AG04449 (cell line): ENCODE measurements at regions of chr1 and their contacts with region 1.

Region 1: GRCh38 chr1:180178511-180179161 is 24.0 kb downstream of the QSOX1 start:
- DNase-seq: no peak
- H3K4me3 ChIP-seq: no peak overlapping the region
- CTCF ChIP-seq: peak; percentile 94

Region 2: GRCh38 chr1:179877586-179878265 is 300.9 kb before region 1 on chr1 and contains the start of gene TOR1AIP2:
- CTCF ChIA-PET with region 1: interaction called, 21 read pairs
- POLR2A ChIA-PET with region 1: no interaction called
- DNase-seq: no peak
- H3K4me3 ChIP-seq: peak within 1 kb of the TSS; percentile 88
- CTCF ChIP-seq: no peak

Region 3: GRCh38 chr1:180033390-180033789 is 145.2 kb before region 1 on chr1:
- CTCF ChIA-PET with region 1: interaction called, 18 read pairs
- POLR2A ChIA-PET with region 1: no interaction called
- DNase-seq: no peak
- H3K4me3 ChIP-seq: no peak overlapping the region
- CTCF ChIP-seq: no peak

Region 4: DNA sequence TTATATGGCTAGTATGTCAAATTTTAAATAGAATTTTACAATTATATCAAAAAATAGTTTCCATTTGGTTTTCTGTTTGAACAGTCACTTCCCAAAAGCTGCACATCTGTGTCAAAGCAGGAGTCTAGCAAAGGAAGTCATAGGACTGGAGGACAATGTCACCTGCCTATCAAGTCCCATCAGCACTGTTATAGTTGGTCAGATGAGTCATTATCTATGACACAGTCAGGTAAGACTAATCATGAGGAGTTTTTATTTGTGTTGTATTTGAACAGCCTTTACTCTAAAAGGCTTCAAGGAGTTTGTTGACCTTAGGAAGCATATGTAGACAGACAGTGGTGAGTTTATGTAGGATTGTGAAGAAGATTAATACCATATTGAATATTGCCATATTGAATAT is 98.2 kb before region 1 on chr1:
- CTCF ChIA-PET with region 1: interaction called, 13 read pairs
- POLR2A ChIA-PET with region 1: no interaction called
- DNase-seq: no peak
- H3K4me3 ChIP-seq: no peak overlapping the region
- CTCF ChIP-seq: no peak

Region 5: GRCh38 chr1:180112984-180113647 is 65.5 kb before region 1 on chr1:
- CTCF ChIA-PET with region 1: no interaction called
- POLR2A ChIA-PET with region 1: no interaction called
- DNase-seq: no peak
- H3K4me3 ChIP-seq: no peak overlapping the region
- CTCF ChIP-seq: no peak

Region 6: DNA sequence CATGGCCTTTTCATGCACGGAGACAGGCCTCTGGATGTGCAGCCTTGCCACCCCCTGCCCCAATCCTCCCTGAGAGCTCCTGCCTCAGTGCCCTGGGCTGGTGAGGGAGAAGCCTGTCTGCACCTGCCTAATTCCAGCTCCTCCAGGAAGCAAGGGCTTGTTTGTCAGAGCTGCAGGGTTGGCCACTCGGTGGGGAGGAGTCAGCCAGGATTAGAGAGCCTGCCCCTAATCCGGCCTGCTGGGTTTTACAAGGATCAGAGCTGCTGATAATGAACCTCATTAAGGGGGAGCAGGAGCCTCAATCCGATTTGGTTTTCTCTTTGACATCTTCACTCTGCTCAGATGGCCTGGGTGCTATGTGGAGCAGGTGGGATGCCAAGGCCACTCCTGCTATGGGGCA is 19.6 kb after region 1 on chr1:
- CTCF ChIA-PET with region 1: interaction called, 26 read pairs
- POLR2A ChIA-PET with region 1: no interaction called
- DNase-seq: no peak
- H3K4me3 ChIP-seq: no peak overlapping the region
- CTCF ChIP-seq: no peak